Activated T-helper 1 cell treated with anti-CD3 and anti-CD28 coated beads, Interleukin-12 subunit alpha, Interleukin-12 subunit beta, Interleukin-2, Interleukin-4 antibody, amounts not matched to agents 30 ng/mL and 10 ng/mL and 1 ng/mL, durations not matched to agents 14 hours and 24 hours and 36 hours (primary cell): ENCODE measurements at regions of chr2 and their contacts with region 1.

Region 1: DNA sequence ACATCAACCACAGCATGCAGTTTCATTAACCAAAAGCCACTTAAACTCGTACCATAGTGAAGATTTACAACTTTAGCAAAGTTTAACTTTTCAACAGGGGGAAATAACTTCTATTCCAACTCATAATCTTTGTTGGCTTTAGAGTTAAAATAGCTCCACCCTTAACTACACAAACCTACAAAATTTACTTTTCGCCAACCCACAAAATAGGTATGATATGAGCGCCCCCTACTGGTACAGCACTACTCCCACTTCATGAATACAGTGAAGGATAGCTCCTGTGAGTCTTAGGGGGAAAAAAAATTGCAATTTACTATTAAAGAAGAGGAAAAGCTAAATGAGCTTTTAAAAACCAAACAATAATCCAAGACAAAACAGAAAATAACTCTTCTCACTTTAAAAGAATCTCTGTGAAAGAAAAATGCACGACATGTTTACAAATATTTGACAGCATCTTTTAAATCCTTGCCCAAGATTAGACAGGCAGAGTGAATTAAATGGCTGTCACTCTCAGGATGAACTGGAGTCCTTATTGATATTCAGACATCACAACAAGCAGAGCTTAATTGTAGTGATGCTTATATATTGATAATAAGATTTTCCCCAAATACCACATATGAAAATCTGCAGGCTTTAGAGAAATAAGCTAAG is 32.2 kb downstream of the TMEFF2 start:
- DNase-seq: peak; percentile 37
- H3K4me3 Mint-ChIP-seq: no peak overlapping the region
- H3K27ac Mint-ChIP-seq: no peak overlapping the region
- H3K4me1 Mint-ChIP-seq: peaks cover 8% of the 10 kb centered on the region
- H3K27me3 Mint-ChIP-seq: peaks cover 13% of the 10 kb centered on the region

Region 2: GRCh38 chr2:191555092-191555742 is 607.3 kb before region 1 on chr2:
- intact Hi-C with region 1: loop called (anchors 1 kb)
- DNase-seq: peak; percentile 70
- H3K4me3 Mint-ChIP-seq: no peak overlapping the region
- H3K27ac Mint-ChIP-seq: no peak overlapping the region
- H3K4me1 Mint-ChIP-seq: peaks cover 10% of the 10 kb centered on the region
- H3K27me3 Mint-ChIP-seq: peaks cover 25% of the 10 kb centered on the region

Region 3: DNA sequence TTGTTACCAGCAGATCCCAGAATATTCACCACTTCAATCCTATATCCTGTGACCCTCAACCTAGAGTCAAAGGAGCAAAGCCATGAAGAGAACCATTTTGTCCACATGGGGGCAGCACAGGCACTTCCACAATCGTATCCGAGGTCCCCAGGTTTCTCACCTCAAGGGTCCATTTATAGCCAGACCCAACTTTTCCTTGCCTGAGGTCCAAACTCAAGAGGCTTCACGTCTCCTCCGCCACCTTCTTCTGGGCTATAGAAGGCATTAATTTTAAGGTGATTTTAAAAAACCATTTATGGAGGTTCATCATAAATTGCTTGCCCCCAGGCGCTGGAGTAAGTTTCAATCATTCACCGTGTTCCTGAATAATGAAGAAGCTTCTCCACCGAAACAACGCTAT is 596.2 kb before region 1 on chr2:
- intact Hi-C with region 1: loop called (anchors 2 kb)
- DNase-seq: peak; percentile 25
- H3K4me3 Mint-ChIP-seq: no peak overlapping the region
- H3K27ac Mint-ChIP-seq: no peak overlapping the region
- H3K4me1 Mint-ChIP-seq: peaks cover 42% of the 10 kb centered on the region
- H3K27me3 Mint-ChIP-seq: peaks cover 51% of the 10 kb centered on the region

Region 4: GRCh38 chr2:191691016-191691735 is 471.3 kb before region 1 on chr2:
- intact Hi-C with region 1: loop called (anchors 1 kb)
- DNase-seq: peak; percentile 31
- H3K4me3 Mint-ChIP-seq: no peak overlapping the region
- H3K27ac Mint-ChIP-seq: peak overlapping the region; percentile 67
- H3K4me1 Mint-ChIP-seq: peaks cover 60% of the 10 kb centered on the region
- H3K27me3 Mint-ChIP-seq: no peaks in the 10 kb centered on the region

Region 5: GRCh38 chr2:191758518-191759507 is 403.7 kb before region 1 on chr2:
- intact Hi-C with region 1: loop called (anchors 2 kb)
- DNase-seq: peak; percentile 8
- H3K4me3 Mint-ChIP-seq: no peak overlapping the region
- H3K27ac Mint-ChIP-seq: no peak overlapping the region
- H3K4me1 Mint-ChIP-seq: peaks cover 5% of the 10 kb centered on the region
- H3K27me3 Mint-ChIP-seq: peaks cover 6% of the 10 kb centered on the region

Region 6: DNA sequence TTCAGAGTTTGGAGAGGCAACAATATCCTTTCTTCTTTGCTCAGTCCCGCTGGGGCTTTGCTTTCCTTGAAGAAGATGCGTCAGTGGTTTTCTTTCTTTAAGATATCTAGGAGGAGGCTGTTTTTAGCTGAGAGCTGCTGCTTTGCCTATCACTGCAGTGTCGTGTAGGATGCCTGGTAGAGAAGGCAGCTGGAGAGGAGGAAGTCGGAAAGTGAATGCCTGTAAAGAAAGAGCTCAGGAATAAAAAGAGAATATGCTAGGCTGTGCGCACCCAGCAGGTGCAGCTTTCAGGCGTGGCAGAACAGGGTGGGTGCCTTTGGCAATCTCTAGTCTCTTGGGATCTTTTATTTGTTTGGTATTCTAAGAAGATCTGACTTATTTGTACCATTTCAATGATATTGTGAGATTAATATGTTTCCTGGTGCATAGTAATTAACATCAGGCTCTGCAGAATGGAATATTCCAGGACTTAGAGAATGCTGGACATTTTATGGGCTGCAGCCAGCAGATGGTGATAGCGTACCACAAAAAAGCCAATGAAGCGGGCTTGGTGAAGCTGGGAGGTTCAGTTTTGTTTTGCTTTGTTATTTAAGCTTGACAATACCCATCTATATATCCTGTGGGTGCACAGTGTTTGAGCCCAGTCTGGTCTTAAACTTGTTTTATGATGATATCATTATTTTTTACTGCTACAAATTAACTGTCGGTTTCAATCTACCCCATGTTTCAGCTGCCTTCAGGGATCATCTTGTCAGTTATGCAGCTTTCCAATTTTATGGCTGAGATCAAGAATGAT is 350.5 kb before region 1 on chr2:
- intact Hi-C with region 1: loop called (anchors 1 kb)
- DNase-seq: no peak
- H3K4me3 Mint-ChIP-seq: no peak overlapping the region
- H3K27ac Mint-ChIP-seq: no peak overlapping the region
- H3K4me1 Mint-ChIP-seq: no peaks in the 10 kb centered on the region
- H3K27me3 Mint-ChIP-seq: peaks cover 21% of the 10 kb centered on the region

Region 7: GRCh38 chr2:192194866-192195547 is 32.5 kb after region 1 on chr2 and contains the start of gene TMEFF2:
- intact Hi-C with region 1: loop called (anchors 2 kb)
- DNase-seq: peak; percentile 30
- H3K4me3 Mint-ChIP-seq: peak within 1 kb of the TSS; percentile 77
- H3K27ac Mint-ChIP-seq: no peak within 1 kb of the TSS
- H3K4me1 Mint-ChIP-seq: peaks cover 23% of the 10 kb centered on the region
- H3K27me3 Mint-ChIP-seq: peaks cover 81% of the 10 kb centered on the region
- total RNA-seq, gene TMEFF2: not detected in 2 replicates